ENCODE measurements at regions of chr1 and their contacts with region 1.

Region 1: DNA sequence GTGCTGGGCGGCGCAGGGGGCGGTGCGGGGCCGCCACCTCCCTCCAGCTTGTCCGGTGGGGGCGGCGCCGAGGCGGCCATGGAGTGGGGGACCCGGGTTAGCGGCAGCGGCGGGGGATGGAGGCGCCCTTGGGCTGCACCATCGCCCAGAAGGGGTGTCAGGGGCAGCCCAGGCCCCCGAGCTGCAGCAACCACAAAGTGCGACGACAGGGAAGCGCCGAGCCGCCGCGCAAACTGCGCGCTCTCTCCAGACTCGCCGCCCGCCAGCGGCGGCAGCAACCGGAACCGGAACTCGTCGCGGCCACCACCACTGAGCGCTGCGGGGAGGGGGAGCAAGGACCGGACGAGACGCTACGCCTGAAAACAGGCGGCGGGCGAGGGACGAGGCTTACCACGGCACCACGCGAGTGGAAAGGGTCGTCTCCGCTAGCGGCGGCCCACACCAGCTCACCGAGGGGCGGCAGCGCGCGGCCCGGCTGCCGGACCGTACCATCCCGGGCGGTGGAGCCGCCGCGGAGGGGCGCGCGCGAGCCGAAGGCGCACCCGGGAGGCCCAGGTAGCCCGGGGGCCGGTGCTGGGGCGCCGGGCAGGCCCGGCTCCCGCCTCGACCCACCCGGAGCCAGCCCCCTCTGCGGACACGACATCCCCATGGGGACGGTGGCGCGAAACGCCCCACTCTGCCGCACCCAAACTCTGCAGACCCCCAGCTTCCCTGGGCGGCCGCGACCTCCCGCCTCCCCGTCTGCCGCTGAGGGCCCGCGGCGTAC is at the start of gene PYGO2:
- DNase-seq: peak; percentile 88
- CTCF ChIP-seq: peak; percentile 76

Region 2: GRCh38 chr1:154821083-154821482 is 140.6 kb before region 1 on chr1:
- CTCF ChIA-PET with region 1: no interaction called
- POLR2A ChIA-PET with region 1: no interaction called
- DNase-seq: no peak
- CTCF ChIP-seq: no peak

Region 3: DNA sequence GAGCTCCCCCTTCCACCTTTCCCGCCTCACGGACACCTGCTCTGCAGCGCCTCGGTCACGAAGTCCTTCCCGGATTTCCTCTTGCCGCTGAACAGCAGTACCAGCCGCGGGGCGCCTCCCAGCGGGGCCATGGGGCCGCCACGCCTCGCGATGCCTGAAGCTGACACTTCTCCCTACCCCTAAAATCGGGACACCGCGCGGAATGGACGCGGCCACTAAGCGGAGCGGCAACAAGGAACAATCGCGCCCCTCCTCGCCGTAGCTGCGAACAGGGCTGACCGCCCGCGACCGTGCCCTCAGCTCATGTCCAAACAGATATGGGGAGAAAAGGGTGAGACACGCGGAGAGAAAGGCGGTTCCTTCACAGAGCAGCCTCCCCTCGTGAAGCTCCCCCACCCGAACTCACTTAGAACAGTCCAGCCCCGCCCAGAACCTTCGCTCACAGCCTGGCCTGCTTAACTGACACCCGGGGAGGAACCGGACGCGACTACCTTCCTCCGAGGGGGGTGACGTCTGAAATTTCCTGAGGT is 25.1 kb before region 1 on chr1 and contains the start of gene PMVK:
- CTCF ChIA-PET with region 1: interaction called, 11 read pairs
- POLR2A ChIA-PET with region 1: interaction called, 3 read pairs
- DNase-seq: peak; percentile 95
- CTCF ChIP-seq: peak; percentile 49

Region 4: DNA sequence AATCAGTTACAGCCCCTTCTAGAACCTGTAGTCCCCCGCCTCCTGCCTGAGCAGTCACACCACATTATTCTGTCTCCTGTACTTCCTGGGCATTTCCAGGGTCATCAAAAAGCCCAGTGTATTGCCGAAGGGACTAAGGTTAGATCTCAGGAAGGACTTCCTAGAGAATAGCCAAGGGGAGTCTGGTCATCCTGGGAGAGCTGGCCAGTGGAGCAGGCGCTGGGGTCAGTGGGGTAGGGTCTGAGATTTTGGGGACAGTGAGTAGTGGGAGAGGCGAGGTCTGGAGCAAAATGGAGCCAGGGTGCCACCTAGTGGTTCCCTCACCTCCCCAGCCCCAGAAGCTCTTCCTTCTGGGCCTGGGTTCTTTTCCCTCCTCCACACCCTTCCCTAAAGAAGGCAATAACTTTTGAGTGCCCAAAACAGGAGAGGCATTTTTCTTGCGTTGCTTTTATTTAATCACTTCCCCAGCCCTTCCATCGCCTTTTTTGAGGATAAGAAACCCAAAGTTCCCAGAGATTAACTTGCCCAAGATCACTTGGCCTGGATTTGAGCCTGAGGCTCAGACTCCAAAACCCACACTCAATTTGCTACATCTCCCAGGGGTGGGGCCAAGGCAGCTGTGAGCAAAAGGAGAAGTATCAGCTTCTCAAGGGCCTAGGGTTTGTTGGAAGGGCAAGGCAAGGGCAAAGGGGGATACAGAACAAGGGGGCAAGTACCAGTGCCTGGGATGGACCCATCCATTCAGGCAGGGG is 17.9 kb before region 1 on chr1:
- CTCF ChIA-PET with region 1: interaction called, 26 read pairs
- POLR2A ChIA-PET with region 1: no interaction called
- DNase-seq: peak; percentile 66
- CTCF ChIP-seq: peak; percentile 89

Region 5: DNA sequence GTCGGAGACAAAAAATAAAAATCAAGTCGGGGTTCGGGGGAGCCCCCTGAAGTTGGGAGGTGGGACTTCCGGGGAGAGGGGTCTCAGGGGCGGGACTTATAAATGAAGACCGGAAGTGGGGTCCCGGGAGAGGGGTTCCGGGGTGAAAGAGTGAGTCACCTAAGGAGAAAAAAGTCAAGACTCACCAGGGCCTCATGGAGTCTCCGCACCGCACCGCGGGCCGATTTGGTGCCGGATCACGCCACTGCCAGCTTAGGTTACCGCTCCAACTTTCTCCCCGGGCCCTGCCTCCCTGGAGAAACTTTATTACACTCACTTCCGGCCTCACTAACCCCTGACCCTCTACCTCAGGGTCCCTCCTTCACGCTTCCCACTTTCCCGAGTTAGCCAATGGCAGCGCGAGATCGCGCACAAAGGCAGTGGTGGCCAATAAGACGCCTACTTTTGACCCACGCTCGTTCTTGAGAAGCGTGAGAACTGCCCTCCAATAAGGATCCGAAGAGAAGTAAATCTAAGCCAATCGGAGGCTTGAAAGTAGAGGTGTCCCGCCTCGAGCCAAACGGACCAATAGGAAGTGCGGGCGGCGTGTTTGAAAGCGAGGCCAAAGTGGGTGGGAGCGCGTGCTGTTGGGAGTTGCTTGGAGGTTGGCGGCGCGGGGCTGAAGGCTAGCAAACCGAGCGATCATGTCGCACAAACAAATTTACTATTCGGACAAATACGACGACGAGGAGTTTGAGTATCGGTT is 12.6 kb after region 1 on chr1 and contains the start of gene CKS1B:
- CTCF ChIA-PET with region 1: interaction called, 51 read pairs
- POLR2A ChIA-PET with region 1: interaction called, 4 read pairs
- DNase-seq: peak; percentile 93
- CTCF ChIP-seq: no peak

Region 6: GRCh38 chr1:155063550-155064110 is 102.0 kb after region 1 on chr1 and contains the start of gene EFNA4:
- CTCF ChIA-PET with region 1: interaction called, 12 read pairs
- POLR2A ChIA-PET with region 1: interaction called, 3 read pairs
- DNase-seq: peak; percentile 91
- CTCF ChIP-seq: no peak

Measured in GM10248 (cell line).